Activated T-helper 1 cell treated with anti-CD3 and anti-CD28 coated beads, Interleukin-12 subunit alpha, Interleukin-12 subunit beta, Interleukin-2, Interleukin-4 antibody, amounts not matched to agents 30 ng/mL and 10 ng/mL and 1 ng/mL, durations not matched to agents 14 hours and 24 hours and 36 hours (primary cell): ENCODE measurements at regions of chr1 and their contacts with region 1.

Region 1: DNA sequence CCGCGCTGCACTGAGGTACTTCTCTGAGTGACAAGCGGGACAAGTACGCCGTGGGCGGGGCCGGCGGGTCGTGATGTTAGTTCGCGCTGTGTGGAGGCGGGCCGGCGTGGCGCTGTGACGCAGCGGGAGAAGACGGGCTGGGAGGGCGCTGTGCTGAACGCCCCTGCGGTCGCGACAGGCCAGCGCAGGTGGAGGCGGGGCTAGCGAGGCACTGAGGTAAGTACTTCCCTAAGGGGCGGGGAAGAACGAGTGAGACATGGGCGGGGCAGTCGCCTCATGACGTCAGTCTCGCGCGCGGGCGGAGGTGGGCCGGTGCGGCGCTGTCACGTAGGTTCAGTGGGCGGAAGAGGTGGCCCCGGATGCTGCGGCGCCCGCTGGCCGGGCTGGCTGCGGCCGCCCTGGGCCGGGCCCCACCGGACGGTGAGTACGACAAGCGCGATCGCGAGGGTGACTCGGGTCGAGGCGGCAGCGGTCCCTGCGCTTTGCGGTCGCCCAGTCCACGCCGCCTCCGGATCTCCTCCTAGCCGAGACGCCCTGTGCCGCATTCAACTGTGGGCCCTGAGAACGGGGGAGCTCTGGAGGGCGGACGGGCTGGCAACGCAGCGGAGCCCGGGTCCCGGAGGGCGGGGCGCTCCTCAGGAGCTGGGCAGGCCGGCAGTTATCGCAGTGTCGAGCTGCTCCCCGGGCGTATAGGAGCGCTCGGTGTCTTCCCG is at the start of gene GUK1:
- DNase-seq: peak; percentile 100
- H3K4me3 Mint-ChIP-seq: peak within 1 kb of the TSS; percentile 100
- H3K27ac Mint-ChIP-seq: peak within 1 kb of the TSS; percentile 97
- H3K4me1 Mint-ChIP-seq: peaks cover 22% of the 10 kb centered on the region
- H3K27me3 Mint-ChIP-seq: peaks cover 21% of the 10 kb centered on the region
- total RNA-seq, gene GUK1: 201 and 202 TPM in 2 replicates

Region 2: GRCh38 chr1:227343727-227344551 is 796.2 kb before region 1 on chr1:
- intact Hi-C with region 1: no loop called
- DNase-seq: no peak
- H3K4me3 Mint-ChIP-seq: no peak overlapping the region
- H3K27ac Mint-ChIP-seq: no peak overlapping the region
- H3K4me1 Mint-ChIP-seq: no peaks in the 10 kb centered on the region
- H3K27me3 Mint-ChIP-seq: no peaks in the 10 kb centered on the region

Region 3: DNA sequence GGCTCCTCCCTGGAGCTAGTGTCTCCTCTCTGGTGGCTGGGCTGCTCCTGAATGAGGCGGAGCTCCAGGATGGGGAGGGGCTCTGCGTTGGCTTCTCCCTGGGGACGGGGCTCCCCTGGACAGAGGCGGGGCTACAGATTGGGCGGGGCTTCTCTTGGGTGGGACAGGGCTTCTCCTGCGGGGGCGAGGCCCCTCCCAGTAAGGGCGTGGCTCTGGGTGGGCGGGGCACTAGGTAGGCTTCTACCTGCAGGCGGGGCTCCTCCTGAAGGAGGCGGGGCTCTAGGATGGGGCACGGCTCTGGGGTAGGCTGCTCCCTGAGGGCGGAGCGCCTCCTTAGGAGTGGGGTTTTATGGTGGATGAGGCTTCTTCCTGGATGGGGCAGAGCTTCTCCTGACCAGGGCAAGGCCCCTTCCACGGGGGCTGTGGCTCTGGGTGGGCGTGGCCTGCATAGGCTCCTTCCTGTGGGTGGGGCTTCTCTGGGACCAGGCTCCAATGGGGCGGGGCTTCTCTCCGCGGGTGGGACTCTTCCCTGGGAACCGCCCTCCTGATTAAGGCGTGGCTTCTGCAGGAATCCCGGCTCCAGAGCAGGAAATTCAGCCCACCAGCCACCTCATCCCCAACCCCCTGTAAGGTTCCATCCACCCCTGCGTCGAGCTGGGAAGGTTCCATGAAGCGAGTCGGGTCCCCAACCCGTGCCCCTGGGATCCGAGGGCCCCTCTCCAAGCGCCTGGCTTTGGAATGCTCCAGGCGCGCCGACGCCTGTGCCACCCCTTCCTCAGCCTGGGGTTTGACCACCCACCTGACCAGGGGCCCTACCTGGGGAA is 80.3 kb before region 1 on chr1:
- intact Hi-C with region 1: loop called (anchors 1 kb)
- DNase-seq: peak; percentile 58
- H3K4me3 Mint-ChIP-seq: peak overlapping the region; percentile 68
- H3K27ac Mint-ChIP-seq: no peak overlapping the region
- H3K4me1 Mint-ChIP-seq: no peaks in the 10 kb centered on the region
- H3K27me3 Mint-ChIP-seq: peaks cover 43% of the 10 kb centered on the region

Region 4: DNA sequence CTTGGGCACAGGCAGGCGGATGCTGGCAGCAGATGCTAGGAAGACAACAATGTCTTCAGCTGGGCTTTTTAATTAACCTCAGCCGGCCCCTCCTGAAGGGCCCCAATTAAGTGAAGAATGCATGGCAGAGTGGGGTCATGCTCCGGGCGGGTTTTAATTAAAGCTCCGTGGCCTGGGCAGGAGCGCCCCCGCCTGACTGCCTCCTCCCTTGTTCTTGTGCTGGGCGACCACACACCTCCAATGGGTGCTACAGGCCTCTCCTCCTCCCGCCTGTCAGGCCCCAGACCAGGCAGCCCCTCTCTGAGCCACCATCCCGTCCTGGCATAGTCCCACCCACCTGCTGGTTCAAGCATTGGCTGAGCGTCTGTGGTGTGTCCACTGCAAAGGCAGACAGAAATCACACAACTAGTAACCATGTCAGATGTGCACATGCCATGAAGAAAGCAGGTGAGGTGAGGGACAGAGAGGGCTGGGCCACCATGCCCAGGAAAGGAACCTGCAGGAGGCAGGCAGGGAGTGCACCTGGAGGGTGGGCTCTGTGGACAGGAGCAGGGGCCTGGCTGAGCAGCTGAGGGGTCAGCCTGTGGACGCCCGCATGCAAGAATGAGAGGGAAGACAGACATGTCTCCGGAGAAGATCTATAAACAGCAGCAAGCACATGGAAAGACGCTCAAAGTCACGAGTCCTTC is 66.1 kb before region 1 on chr1:
- intact Hi-C with region 1: no loop called
- DNase-seq: no peak
- H3K4me3 Mint-ChIP-seq: no peak overlapping the region
- H3K27ac Mint-ChIP-seq: no peak overlapping the region
- H3K4me1 Mint-ChIP-seq: no peaks in the 10 kb centered on the region
- H3K27me3 Mint-ChIP-seq: no peaks in the 10 kb centered on the region

Region 5: GRCh38 chr1:228102791-228103620 is 37.1 kb before region 1 on chr1 and contains the start of gene C1orf35:
- intact Hi-C with region 1: loop called (anchors 1 kb)
- DNase-seq: peak; percentile 96
- H3K4me3 Mint-ChIP-seq: peak within 1 kb of the TSS; percentile 92
- H3K27ac Mint-ChIP-seq: peak within 1 kb of the TSS; percentile 93
- H3K4me1 Mint-ChIP-seq: peaks cover 25% of the 10 kb centered on the region
- H3K27me3 Mint-ChIP-seq: no peaks in the 10 kb centered on the region
- total RNA-seq, gene C1orf35: 27.7 and 30.7 TPM in 2 replicates